Naive thymus-derived CD4-positive, alpha-beta T cell (primary cell): ENCODE measurements at regions of chr17 and their contacts with region 1.

Region 1: GRCh38 chr17:66331038-66331816 is 28.8 kb downstream of the PRKCA start:
- DNase-seq: peak in 8 of 9 donors; percentile 32 to 88 (median 76)
- ATAC-seq: peak; percentile 91
- H3K4me3 ChIP-seq: peak overlapping the region; percentile 6
- H3K4me3 Mint-ChIP-seq: peak overlapping the region; percentile 68 to 92 (median 83)
- H3K27ac ChIP-seq: peak overlapping the region; percentile 69
- H3K27ac Mint-ChIP-seq: peak overlapping the region; percentile 88 to 99 (median 95)
- H3K4me1 ChIP-seq: peaks cover 0 to 91% of the 10 kb centered on the region in 2 donors
- H3K4me1 Mint-ChIP-seq: peaks cover 43 to 92% (median 81%) of the 10 kb centered on the region in 7 donors
- H3K27me3 ChIP-seq: no peaks in the 10 kb centered on the region
- H3K27me3 Mint-ChIP-seq: no peaks in the 10 kb centered on the region

Region 2: GRCh38 chr17:66248285-66248684 is 82.9 kb before region 1 on chr17:
- CTCF ChIA-PET with region 1: no interaction called
- POLR2A ChIA-PET with region 1: no interaction called
- intact Hi-C with region 1: loop called in 1 of 2 experiments (anchors 2 kb)
- DNase-seq: no peak
- ATAC-seq: no peak
- H3K4me3 ChIP-seq: no peak overlapping the region
- H3K4me3 Mint-ChIP-seq: peak overlapping the region in 3 of 10 donors; percentile 17 to 42 (median 25)
- H3K27ac ChIP-seq: no peak overlapping the region
- H3K27ac Mint-ChIP-seq: peak overlapping the region in 3 of 9 donors; percentile 54 to 89 (median 68)
- H3K4me1 ChIP-seq: peaks cover 8 to 27% of the 10 kb centered on the region in 2 donors
- H3K4me1 Mint-ChIP-seq: peaks cover 2 to 58% (median 41%) of the 10 kb centered on the region in 7 donors
- H3K27me3 ChIP-seq: no peaks in the 10 kb centered on the region
- H3K27me3 Mint-ChIP-seq: peaks cover 0 to 2% (median 0%) of the 10 kb centered on the region in 5 donors

Region 3: GRCh38 chr17:66262767-66263166 is 68.5 kb before region 1 on chr17:
- CTCF ChIA-PET with region 1: no interaction called
- POLR2A ChIA-PET with region 1: no interaction called
- intact Hi-C with region 1: no loop called
- DNase-seq: no peak
- ATAC-seq: no peak
- H3K4me3 ChIP-seq: no peak overlapping the region
- H3K4me3 Mint-ChIP-seq: no peak overlapping the region
- H3K27ac ChIP-seq: no peak overlapping the region
- H3K27ac Mint-ChIP-seq: no peak overlapping the region
- H3K4me1 ChIP-seq: no peaks in the 10 kb centered on the region
- H3K4me1 Mint-ChIP-seq: peaks cover 0 to 13% (median 7%) of the 10 kb centered on the region in 7 donors
- H3K27me3 ChIP-seq: no peaks in the 10 kb centered on the region
- H3K27me3 Mint-ChIP-seq: peaks cover 0 to 20% (median 0%) of the 10 kb centered on the region in 5 donors

Region 4: DNA sequence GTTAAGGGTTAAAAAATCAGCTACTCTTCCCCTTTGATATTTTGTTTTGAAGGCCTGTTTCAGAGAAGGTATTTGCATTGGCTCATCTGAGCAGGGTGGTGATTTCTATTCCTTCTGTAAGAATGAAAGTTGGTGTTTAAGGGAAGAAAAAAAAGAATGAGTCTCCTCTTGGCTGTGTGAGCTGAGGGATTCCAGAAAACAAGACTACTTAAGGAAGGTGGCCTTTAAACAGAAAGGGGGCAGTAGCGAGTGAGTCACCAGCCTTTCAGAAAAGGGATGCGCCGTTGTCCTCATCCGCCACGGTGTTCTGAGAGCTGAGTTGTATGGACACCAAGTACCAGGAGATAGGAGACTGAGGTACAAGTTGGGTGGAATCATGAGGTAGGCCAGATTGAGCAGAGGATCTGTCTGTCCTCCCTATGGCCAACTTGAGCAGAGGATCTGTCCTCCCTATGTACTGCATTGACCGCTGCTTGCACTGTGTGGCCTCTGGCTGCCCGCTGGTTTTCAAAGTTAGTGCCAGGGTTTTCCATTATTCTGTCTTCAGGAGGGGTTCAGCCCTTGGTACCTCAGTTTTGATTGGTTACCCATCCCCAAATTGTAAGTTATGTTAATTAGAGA is 20.6 kb before region 1 on chr17:
- CTCF ChIA-PET with region 1: interaction called, 8 read pairs
- POLR2A ChIA-PET with region 1: interaction called, 89 read pairs
- intact Hi-C with region 1: loop called (anchors 1 kb)
- DNase-seq: peak in 1 of 9 donors; percentile 37
- ATAC-seq: no peak
- H3K4me3 ChIP-seq: no peak overlapping the region
- H3K4me3 Mint-ChIP-seq: peak overlapping the region in 9 of 10 donors; percentile 2 to 99 (median 51)
- H3K27ac ChIP-seq: peak overlapping the region; percentile 31
- H3K27ac Mint-ChIP-seq: peak overlapping the region; percentile 21 to 98 (median 88)
- H3K4me1 ChIP-seq: peaks cover 11 to 68% of the 10 kb centered on the region in 2 donors
- H3K4me1 Mint-ChIP-seq: peaks cover 56 to 100% (median 94%) of the 10 kb centered on the region in 7 donors
- H3K27me3 ChIP-seq: no peaks in the 10 kb centered on the region
- H3K27me3 Mint-ChIP-seq: no peaks in the 10 kb centered on the region

Region 5: DNA sequence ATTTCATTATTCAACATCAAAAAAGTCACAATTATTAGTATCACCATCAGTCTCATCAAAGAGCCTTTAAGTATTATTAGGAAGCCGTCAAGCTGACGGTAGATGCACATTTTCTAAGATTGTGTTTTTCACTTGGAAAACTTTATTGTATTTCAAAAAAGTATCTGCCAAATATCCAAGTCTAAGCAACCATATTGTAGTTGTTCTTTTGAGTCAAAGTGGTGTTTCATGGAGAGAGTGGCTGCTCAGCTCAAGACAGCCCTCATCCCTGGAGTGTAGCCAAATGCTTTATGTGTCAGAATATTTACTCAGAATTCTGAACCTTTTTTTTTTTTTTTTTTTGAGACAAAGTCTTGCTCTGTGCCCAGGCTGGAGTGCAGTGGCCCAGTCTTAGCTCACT is 16.4 kb after region 1 on chr17:
- CTCF ChIA-PET with region 1: no interaction called
- POLR2A ChIA-PET with region 1: interaction called, 9 read pairs
- intact Hi-C with region 1: loop called in 1 of 2 experiments (anchors 1 kb)
- DNase-seq: no peak
- ATAC-seq: no peak
- H3K4me3 ChIP-seq: no peak overlapping the region
- H3K4me3 Mint-ChIP-seq: peak overlapping the region in 2 of 10 donors; percentile 13 to 47
- H3K27ac ChIP-seq: no peak overlapping the region
- H3K27ac Mint-ChIP-seq: no peak overlapping the region
- H3K4me1 ChIP-seq: peaks cover 0 to 54% of the 10 kb centered on the region in 2 donors
- H3K4me1 Mint-ChIP-seq: peaks cover 26 to 82% (median 79%) of the 10 kb centered on the region in 7 donors
- H3K27me3 ChIP-seq: no peaks in the 10 kb centered on the region
- H3K27me3 Mint-ChIP-seq: no peaks in the 10 kb centered on the region

Region 6: DNA sequence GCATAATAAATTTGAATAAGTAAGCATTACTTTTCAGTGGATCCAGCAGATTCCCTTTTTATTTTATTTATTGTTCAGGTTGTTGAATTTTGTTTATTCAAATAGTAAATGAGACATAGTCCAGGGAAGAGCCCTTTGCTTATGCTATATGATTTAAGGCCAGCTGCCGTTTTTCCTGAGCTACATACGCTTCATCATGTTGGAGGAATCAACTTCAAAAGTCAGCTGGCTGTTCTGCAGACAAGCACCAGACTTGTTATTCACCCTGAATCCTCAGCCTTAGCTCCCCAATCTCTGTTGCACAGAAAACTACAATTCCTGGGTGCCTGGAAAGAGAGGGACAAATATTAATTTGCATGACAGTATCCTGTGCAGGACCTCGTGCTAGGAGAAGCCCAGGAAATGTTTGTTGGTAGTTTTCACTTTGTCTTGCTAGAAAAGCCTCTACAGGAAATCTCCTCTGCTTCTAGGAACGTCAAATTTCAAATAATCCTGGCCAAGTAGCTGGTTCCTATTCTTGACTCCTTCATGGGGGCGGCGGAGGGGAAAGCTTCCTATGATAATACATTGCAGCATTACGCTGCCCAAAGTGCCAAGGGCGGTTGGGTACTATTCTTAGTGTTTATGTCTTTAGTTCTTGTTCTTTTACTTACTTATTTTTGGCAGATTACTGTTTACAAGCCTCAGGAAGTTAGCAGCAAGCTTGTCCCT is 72.8 kb after region 1 on chr17:
- CTCF ChIA-PET with region 1: no interaction called
- POLR2A ChIA-PET with region 1: interaction called, 8 read pairs
- intact Hi-C with region 1: loop called in 1 of 2 experiments (anchors 2 kb)
- DNase-seq: peak in 2 of 9 donors; percentile 20
- ATAC-seq: no peak
- H3K4me3 ChIP-seq: no peak overlapping the region
- H3K4me3 Mint-ChIP-seq: peak overlapping the region; percentile 67 to 85 (median 72)
- H3K27ac ChIP-seq: peak overlapping the region; percentile 14
- H3K27ac Mint-ChIP-seq: peak overlapping the region; percentile 58 to 97 (median 89)
- H3K4me1 ChIP-seq: peaks cover 14 to 82% of the 10 kb centered on the region in 2 donors
- H3K4me1 Mint-ChIP-seq: peaks cover 69 to 96% (median 90%) of the 10 kb centered on the region in 7 donors
- H3K27me3 ChIP-seq: no peaks in the 10 kb centered on the region
- H3K27me3 Mint-ChIP-seq: no peaks in the 10 kb centered on the region